ENCODE measurements at regions of chr1 and their contacts with region 1.

Region 1: DNA sequence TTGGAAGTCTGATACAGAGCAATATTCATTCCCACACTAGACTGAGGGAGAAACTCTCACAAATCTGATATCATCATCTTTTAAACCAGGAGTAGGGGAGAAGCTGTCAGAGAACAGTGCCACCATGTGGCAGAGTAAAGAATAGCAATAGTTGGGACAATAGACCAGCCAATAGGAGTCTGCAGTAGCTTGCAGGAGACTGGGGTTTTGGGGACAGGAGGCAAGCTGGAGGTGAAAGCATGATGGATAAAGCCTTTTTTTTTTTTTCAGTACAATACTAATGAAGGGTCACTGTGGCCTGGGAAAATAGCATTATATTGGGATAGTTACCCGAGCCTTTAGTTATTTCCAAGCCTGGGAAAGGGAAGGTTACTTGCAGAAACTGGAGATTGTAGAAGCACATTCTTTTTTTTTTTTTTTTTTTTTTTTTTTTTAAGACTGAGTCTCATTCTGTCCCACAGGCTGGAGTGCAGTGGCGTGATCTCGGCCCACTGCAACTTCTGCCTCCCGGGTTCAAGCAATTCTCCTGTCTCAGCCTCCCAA is 120.7 kb downstream of the S1PR1 start:
- DNase-seq: no peak
- H3K4me3 ChIP-seq: no peak overlapping the region
- H3K27ac ChIP-seq: no peak overlapping the region
- H3K4me1 ChIP-seq: peaks cover 0 to 7% (median 0%) of the 10 kb centered on the region in 3 donors
- H3K27me3 ChIP-seq: no peaks in the 10 kb centered on the region
- CTCF ChIP-seq: peak; percentile 61 to 84 (median 69)
- POLR2A ChIP-seq: no peak

Region 2: GRCh38 chr1:101247404-101248287 is 109.9 kb before region 1 on chr1:
- intact Hi-C with region 1: no loop called
- DNase-seq: no peak
- H3K4me3 ChIP-seq: no peak overlapping the region
- H3K27ac ChIP-seq: no peak overlapping the region
- H3K4me1 ChIP-seq: no peaks in the 10 kb centered on the region
- H3K27me3 ChIP-seq: peaks cover 0 to 3% (median 0%) of the 10 kb centered on the region in 4 donors
- CTCF ChIP-seq: no peak
- POLR2A ChIP-seq: no peak

Region 3: GRCh38 chr1:101257500-101258325 is 99.8 kb before region 1 on chr1:
- intact Hi-C with region 1: no loop called
- DNase-seq: no peak
- H3K4me3 ChIP-seq: no peak overlapping the region
- H3K27ac ChIP-seq: no peak overlapping the region
- H3K4me1 ChIP-seq: peaks cover 0 to 32% (median 6%) of the 10 kb centered on the region in 3 donors
- H3K27me3 ChIP-seq: no peaks in the 10 kb centered on the region
- CTCF ChIP-seq: no peak
- POLR2A ChIP-seq: no peak

Region 4: DNA sequence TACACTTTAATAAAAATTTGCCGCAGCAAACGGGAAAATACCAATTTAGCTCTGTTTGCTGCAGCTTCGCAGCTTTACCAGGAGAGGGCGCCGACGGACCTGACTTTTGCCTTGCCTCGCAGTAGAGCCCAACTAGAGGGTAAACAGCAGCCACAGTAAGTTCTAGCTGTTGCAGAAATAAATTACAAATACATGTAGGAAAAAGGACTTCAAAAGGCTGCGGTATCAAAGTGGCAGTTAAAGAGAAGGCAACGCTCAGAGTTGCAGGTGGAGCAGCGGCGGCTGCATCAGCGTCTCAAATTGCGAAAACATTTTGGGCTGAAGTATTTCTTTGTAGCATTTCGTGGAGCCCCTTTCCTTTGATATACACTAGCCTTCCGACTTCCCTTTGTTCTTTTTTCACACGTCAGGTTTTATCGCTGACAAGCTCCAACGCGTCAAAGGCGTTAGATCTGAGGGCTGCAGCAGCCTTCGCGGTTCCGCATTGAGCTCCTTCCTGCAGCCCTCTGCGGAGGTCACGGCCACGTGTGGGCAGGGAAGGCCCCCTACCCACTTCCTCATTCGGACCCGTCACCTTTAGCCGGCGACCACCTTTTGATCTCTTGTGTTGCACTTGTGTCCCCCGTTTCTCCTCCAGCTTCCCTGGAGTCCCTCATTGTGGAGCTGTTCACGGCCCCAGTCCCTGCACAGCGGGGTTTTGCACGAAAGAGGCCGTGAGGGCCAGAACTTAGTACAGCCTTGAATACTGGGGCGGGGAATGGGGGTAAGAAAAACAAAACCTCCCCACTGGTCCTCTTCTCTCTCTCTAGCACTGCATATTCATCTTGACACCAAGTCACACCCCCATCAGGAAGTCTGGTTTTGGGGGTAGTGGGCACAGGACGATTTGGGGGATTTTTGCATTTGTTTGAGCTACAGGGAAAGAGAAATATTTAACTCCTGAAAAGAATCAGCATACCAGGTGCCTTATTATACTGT is 47.9 kb before region 1 on chr1:
- intact Hi-C with region 1: loop called (anchors 10 kb)
- DNase-seq: no peak
- H3K4me3 ChIP-seq: peak overlapping the region; percentile 13 to 55 (median 40)
- H3K27ac ChIP-seq: peak overlapping the region in 1 of 4 donors; percentile 14
- H3K4me1 ChIP-seq: peaks cover 6 to 18% (median 7%) of the 10 kb centered on the region in 3 donors
- H3K27me3 ChIP-seq: peaks cover 0 to 8% (median 0%) of the 10 kb centered on the region in 4 donors
- CTCF ChIP-seq: peak; percentile 73 to 86 (median 77)
- POLR2A ChIP-seq: no peak

Region 5: DNA sequence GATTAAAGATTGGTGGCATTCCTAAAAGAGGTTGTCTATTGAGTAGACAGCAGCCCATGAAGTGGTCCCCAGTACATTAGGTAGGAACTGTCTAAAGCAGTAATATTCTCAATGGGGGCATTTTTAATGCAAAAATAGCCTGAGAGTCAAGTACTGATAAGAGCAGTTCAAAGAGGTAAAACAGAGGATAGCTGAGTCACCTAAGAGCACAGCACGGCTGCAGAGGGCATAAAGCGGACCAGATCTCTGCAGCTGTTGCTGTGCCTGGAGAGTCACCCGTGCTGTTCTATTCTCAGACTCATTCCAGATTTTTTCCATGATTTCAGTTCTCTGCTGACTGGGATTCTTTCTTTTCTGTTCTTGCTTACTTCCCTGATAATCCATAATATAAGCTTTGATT is 326.0 kb after region 1 on chr1:
- intact Hi-C with region 1: no loop called
- DNase-seq: no peak
- H3K4me3 ChIP-seq: no peak overlapping the region
- H3K27ac ChIP-seq: no peak overlapping the region
- H3K4me1 ChIP-seq: no peaks in the 10 kb centered on the region
- H3K27me3 ChIP-seq: no peaks in the 10 kb centered on the region
- CTCF ChIP-seq: no peak
- POLR2A ChIP-seq: no peak